ENCODE measurements at regions of chr11 and their contacts with region 1.

Region 1: GRCh38 chr11:5684646-5685362 is at the start of gene TRIM5:
- DNase-seq: peak; percentile 89
- H3K4me3 Mint-ChIP-seq: peak within 1 kb of the TSS; percentile 92
- H3K27ac Mint-ChIP-seq: peak within 1 kb of the TSS; percentile 97
- H3K4me1 Mint-ChIP-seq: peaks cover 35% of the 10 kb centered on the region
- H3K27me3 Mint-ChIP-seq: no peaks in the 10 kb centered on the region
- total RNA-seq, gene TRIM5: 18.9 to 21.0 TPM

Region 2: GRCh38 chr11:4607781-4608666 is 1076.8 kb before region 1 on chr11 and contains the start of gene TRIM68:
- CTCF ChIA-PET with region 1: no interaction called
- POLR2A ChIA-PET with region 1: no interaction called
- intact Hi-C with region 1: loop called (anchors 5 kb)
- DNase-seq: peak; percentile 97
- H3K4me3 Mint-ChIP-seq: peak within 1 kb of the TSS; percentile 93
- H3K27ac Mint-ChIP-seq: peak within 1 kb of the TSS; percentile 87
- H3K4me1 Mint-ChIP-seq: peaks cover 34% of the 10 kb centered on the region
- H3K27me3 Mint-ChIP-seq: no peaks in the 10 kb centered on the region
- total RNA-seq, gene TRIM68: 8.7 to 9.2 TPM

Region 3: GRCh38 chr11:5624489-5625279 is 60.1 kb before region 1 on chr11 and contains the start of gene TRIM34:
- CTCF ChIA-PET with region 1: interaction called, 4 read pairs
- POLR2A ChIA-PET with region 1: no interaction called
- intact Hi-C with region 1: loop called (anchors 1 kb)
- DNase-seq: peak; percentile 70
- H3K4me3 Mint-ChIP-seq: peak within 1 kb of the TSS; percentile 98
- H3K27ac Mint-ChIP-seq: peak within 1 kb of the TSS; percentile 92
- H3K4me1 Mint-ChIP-seq: peaks cover 36% of the 10 kb centered on the region
- H3K27me3 Mint-ChIP-seq: no peaks in the 10 kb centered on the region
- total RNA-seq, gene TRIM34: 9.6 to 11.9 TPM

Region 4: GRCh38 chr11:5712507-5712906 is 27.7 kb after region 1 on chr11:
- CTCF ChIA-PET with region 1: interaction called, 14 read pairs
- POLR2A ChIA-PET with region 1: no interaction called
- intact Hi-C with region 1: loop called (anchors 1 kb)
- DNase-seq: no peak
- H3K4me3 Mint-ChIP-seq: no peak overlapping the region
- H3K27ac Mint-ChIP-seq: no peak overlapping the region
- H3K4me1 Mint-ChIP-seq: peaks cover 4% of the 10 kb centered on the region
- H3K27me3 Mint-ChIP-seq: no peaks in the 10 kb centered on the region

Region 5: GRCh38 chr11:6619004-6619745 is 934.4 kb after region 1 on chr11 and contains the start of gene TPP1:
- CTCF ChIA-PET with region 1: no interaction called
- POLR2A ChIA-PET with region 1: no interaction called
- intact Hi-C with region 1: loop called (anchors 1 kb)
- DNase-seq: peak; percentile 93
- H3K4me3 Mint-ChIP-seq: no peak within 1 kb of the TSS
- H3K27ac Mint-ChIP-seq: no peak within 1 kb of the TSS
- H3K4me1 Mint-ChIP-seq: peaks cover 10% of the 10 kb centered on the region
- H3K27me3 Mint-ChIP-seq: no peaks in the 10 kb centered on the region
- total RNA-seq, gene TPP1: 53.2 to 56.6 TPM